Tibial artery (tissue), 4 donors: ENCODE measurements at regions of chr2 and their contacts with region 1.

Region 1: DNA sequence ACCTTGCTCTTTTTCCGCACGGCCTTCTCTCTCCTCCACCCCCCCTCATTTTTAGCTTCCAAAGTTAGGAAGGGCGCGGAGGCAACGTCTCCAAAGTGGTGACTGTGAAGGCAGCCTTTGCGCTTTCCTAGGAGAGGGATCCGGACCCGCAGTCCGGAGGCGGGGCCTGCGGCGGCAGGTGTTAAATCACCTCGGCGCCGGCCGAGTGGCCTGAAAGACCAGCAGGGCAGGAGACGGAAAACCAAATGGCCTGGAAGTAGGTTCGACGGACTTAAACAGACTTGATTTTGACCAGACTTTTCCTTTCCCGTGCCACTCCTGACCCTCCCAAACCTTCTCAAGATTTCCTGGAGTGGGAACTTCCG is 615 bp downstream of the GORASP2 start:
- DNase-seq: peak in 1 of 2 donors; percentile 38
- H3K4me3 ChIP-seq: peak overlapping the region; percentile 92 to 99
- H3K27ac ChIP-seq: peak overlapping the region; percentile 98 to 99
- H3K4me1 ChIP-seq: peaks cover 0 to 45% (median 21%) of the 10 kb centered on the region in 4 donors
- H3K27me3 ChIP-seq: no peaks in the 10 kb centered on the region
- CTCF ChIP-seq: no peak

Region 2: DNA sequence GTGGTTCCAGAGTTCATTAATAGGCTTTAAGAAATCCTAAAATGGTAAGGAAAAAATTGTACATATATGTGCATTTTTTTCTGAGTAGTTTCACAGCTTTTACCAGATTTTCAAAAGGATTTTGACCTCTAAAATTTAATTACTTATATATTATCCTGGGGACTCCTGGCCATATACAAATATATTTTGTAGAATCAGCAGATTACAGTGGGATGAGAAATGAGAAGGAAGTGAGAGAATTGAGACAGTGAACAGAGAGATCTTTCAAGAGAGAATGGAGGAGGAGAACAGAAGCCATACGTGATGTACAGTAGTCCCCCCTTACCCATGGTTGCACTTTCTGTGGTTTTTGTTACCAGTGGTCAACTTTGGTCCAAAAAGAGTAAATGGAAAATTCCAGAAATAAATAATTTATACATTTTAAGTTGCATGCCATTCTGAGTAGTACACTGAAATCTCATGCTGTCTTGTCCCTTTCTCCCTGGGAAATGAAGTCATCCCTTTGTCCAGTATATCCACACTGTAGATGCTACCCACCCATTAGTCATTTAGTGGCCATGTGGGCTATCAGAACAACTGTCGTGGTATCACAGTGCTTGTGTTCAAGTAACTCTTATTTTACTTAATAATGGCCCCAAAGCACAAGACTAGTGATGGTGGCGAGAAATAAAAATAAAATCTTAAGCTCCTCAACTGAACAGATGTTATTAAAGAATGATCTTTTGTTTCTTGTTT is 882.2 kb before region 1 on chr2:
- intact Hi-C with region 1: loop called (anchors 10 kb)
- DNase-seq: no peak
- H3K4me3 ChIP-seq: no peak overlapping the region
- H3K27ac ChIP-seq: no peak overlapping the region
- H3K4me1 ChIP-seq: no peaks in the 10 kb centered on the region
- H3K27me3 ChIP-seq: no peaks in the 10 kb centered on the region
- CTCF ChIP-seq: no peak